ENCODE measurements at regions of chrX and their contacts with region 1.

Region 1: DNA sequence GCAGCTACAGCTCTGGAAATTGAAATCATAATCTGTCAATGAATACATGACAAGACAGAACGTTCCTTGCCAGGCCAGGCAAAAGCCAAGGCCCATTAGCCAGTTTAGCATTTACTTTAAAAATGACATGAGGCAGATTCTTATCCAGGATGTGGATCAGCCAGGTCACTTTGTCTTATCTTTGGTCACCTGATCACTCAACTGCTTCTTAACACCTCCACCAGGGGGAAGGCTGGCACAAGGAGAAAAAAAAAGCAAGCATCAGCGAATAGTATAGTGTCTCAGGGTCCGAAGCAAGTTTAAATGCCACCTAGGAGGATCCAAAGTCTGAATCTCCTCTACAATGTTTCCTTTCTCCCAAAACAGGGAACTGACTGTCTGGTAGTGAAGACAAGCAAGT is 18.8 kb downstream of the ATP1B4 start:
- DNase-seq: peak; percentile 5 to 11
- H3K4me3 ChIP-seq: no peak overlapping the region
- H3K27ac ChIP-seq: no peak overlapping the region
- H3K4me1 ChIP-seq: no peaks in the 10 kb centered on the region
- H3K27me3 ChIP-seq: no peaks in the 10 kb centered on the region
- CTCF ChIP-seq: peak in 3 of 6 experiments; percentile 33 to 57 (median 33)
- POLR2A ChIP-seq: no peak

Region 2: DNA sequence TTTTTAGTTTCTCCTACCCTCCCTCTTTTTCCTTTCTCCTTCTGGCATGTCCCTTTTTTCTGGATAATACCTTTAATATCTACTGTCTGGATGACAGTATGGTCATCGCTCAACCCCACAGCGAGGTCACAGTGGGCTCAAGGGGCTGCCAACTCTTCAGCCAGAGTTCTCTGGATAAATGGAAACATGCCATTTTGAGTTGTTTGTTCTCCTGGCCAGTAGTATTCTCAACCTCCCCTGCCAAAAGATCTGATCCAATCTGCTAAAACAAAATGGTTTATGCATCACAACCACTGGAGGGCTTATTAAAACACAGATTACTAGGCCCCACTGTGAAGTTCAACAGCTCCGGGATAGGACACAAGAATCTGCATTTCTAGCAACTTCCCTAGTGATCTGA is 93.4 kb after region 1 on chrX:
- intact Hi-C with region 1: loop called (anchors 5 kb)
- DNase-seq: no peak
- H3K4me3 ChIP-seq: no peak overlapping the region
- H3K27ac ChIP-seq: no peak overlapping the region
- H3K4me1 ChIP-seq: no peaks in the 10 kb centered on the region
- H3K27me3 ChIP-seq: no peaks in the 10 kb centered on the region
- CTCF ChIP-seq: no peak
- POLR2A ChIP-seq: no peak

Measured in thyroid gland (tissue), 4 donors.